ENCODE measurements at regions of chr1 and their contacts with region 1.

Region 1: DNA sequence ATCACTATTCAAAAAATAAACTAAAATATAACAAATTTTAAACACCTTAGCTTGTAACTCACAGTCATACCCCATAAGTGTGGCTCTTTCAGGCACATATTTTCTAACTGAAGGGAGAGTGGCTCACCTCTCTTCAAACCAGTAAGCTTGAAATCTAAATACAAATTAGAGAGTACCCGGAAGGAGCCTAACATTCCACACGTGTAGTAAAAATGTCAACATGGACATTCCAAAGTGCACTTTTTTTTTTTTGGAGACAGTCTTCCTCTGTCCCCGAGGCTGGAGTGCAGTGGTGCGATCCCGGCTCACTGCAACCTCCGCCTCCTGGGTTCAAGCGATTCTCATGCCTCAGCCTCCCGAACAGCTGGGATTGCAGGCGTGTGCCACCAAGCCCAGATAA is 275.6 kb upstream of the ADGRL2 start:
- DNase-seq: no peak
- ATAC-seq: no peak

Region 2: DNA sequence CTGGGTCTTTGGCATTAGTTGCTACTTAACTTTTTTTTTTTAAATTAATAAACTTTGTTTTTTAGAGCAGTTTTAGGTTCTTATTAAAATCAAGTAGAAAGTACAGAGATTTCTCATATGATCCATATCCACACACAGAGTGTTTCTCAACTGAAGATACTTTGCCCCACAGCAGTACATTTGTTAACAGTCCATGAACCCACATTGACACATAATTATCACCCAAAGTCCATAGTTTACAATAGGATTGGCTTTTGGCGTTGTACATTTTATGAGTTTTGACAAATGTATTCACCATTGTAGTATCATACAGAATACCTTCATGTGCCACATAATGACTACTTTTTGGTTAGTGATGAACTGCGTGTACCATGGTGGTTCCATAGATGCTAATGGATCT is 382.5 kb after region 1 on chr1:
- intact Hi-C with region 1: loop called (anchors 5 kb)
- DNase-seq: no peak
- ATAC-seq: no peak